ENCODE measurements at regions of chr5 and their contacts with region 1.

Region 1: DNA sequence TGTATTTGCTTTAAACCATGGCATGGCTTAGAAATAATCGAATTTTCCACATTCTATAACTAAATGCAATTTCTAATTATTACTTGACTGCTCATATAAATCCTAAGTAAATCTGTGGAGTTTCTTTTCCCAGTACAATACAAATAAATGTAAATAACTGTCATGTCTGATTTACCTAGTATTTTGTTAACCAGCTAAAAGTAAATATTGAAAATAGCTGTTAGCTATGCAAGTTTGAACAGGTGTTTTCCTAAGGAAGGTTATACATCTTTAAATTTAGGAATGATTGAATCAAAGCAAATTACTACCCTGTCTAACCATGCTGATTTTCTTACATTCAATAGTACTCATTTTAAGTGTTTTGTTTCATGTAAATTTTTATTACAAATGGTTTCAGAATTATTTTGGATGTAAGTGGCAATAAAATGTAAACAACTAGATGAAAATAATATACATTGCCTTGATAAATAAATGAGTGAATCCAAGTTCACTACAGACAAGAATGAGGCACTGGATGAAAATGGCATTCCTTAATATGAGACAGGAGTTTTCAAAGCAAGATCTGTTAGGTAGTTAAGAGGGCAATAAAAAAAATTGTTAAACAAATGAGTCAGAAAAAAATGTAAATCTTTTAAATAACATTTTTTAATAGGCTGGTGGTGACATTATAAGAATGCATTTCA is 15.8 kb downstream of the MCIDAS start:
- DNase-seq: peak; percentile 44
- ATAC-seq: peak; percentile 73
- H3K4me3 ChIP-seq: no peak overlapping the region
- H3K27ac ChIP-seq: no peak overlapping the region
- H3K4me1 ChIP-seq: peaks cover 5% of the 10 kb centered on the region; the same call in 1 of the 2 replicates
- H3K27me3 ChIP-seq: no peaks in the 10 kb centered on the region
- CTCF ChIP-seq: no peak

Region 2: GRCh38 chr5:53425598-53426511 is 1785.4 kb before region 1 on chr5:
- CTCF ChIA-PET with region 1: no interaction called
- POLR2A ChIA-PET with region 1: interaction called, 19 read pairs
- intact Hi-C with region 1: no loop called
- DNase-seq: peak; percentile 46
- ATAC-seq: no peak
- H3K4me3 ChIP-seq: no peak overlapping the region
- H3K27ac ChIP-seq: peak overlapping the region; percentile 100
- H3K4me1 ChIP-seq: peaks cover 73% of the 10 kb centered on the region
- H3K27me3 ChIP-seq: no peaks in the 10 kb centered on the region
- CTCF ChIP-seq: peak; percentile 53

Region 3: DNA sequence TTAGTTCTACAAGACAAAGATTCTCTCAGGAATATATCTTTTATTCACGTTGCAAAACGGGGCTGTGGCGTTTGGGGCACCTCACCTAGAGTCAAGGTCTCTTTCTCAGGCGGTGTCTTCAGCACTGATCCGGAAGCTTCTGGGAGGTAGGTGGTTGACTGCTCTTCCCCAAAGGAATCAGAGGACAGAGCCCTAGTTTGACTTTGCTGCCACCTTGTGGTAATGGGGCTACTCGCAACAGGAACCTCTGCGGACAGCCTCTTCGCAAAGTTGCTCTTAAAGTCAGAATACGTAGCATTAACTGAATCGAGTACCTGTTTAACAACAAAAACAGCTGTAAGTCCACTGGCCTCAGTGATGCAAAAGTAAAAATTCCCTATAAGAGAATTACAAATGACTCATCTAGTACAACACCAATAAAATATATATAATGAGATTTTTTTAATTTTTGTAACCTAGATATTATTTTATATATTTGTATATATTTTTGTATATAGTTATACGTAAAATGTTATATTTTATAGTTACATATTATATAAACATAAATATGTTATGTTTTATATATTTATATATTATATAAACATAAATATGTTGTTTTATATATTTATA is 64.7 kb before region 1 on chr5:
- CTCF ChIA-PET with region 1: no interaction called
- POLR2A ChIA-PET with region 1: no interaction called
- intact Hi-C with region 1: no loop called
- DNase-seq: peak; percentile 83
- ATAC-seq: peak; percentile 97
- H3K4me3 ChIP-seq: no peak overlapping the region
- H3K27ac ChIP-seq: no peak overlapping the region
- H3K4me1 ChIP-seq: peaks cover 2% of the 10 kb centered on the region
- H3K27me3 ChIP-seq: no peaks in the 10 kb centered on the region
- CTCF ChIP-seq: peak; percentile 76

Measured in PC-3 (cell line).